GM12878 (cell line): ENCODE measurements at regions of chr20 and their contacts with region 1.

Region 1: DNA sequence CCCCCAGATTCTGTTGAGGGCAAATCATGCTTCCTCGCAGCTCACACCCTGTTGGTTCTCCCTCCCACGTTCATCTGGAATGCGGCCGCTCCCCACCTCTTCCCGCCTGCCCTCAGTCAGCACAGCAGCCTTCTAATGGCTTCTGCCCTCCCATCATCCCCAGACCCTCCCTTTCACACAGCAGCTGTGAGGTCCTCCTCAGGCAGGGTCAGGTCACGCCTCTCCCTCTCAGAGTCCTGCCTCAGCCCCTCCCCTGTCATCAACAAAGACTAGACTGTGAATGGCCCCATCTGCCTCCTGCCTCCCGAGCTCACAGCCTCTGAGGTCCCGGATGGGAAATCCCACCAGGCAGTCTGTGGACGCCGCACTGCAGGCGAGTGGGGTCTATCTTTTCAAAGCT is 7.9 kb upstream of the BHLHE23 start:
- DNase-seq: no peak
- ATAC-seq: peak; percentile 34
- H3K4me3 ChIP-seq: peak overlapping the region; percentile 52; the same call in 1 of the 2 replicates
- H3K27ac ChIP-seq: peak overlapping the region; percentile 24; the same call in 1 of the 2 replicates
- H3K4me1 ChIP-seq: peaks cover 30% of the 10 kb centered on the region
- H3K27me3 ChIP-seq: no peaks in the 10 kb centered on the region
- CTCF ChIP-seq: no peak
- EP300 ChIP-seq: no peak
- POLR2A ChIP-seq: peak; percentile 37
- RAD21 ChIP-seq: no peak

Region 2: DNA sequence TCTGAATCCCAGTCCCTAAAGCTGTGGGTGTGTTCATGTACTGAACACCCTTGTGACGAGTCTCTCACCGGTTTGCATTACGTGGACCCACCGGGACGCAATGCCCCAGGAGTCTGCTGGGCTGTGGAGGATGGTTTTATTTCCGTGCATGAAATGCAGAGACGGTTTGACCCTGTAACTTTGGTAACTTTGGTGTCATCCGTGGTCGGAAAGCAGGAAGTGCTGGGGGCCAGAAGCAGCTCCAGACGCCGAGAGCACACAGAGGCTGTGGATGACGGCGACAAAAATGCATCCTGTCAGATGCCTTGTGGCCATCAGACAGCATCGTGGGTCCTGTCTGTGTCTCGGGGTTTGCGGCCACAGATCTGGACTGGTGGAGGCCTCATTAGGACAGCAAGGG is 15.1 kb before region 1 on chr20:
- CTCF ChIA-PET with region 1: no interaction called
- POLR2A ChIA-PET with region 1: no interaction called
- RAD21 ChIA-PET with region 1: no interaction called
- SMC1A ChIA-PET with region 1: no interaction called
- in situ Hi-C with region 1: no loop called
- intact Hi-C with region 1: no loop called
- DNase-seq: no peak
- ATAC-seq: no peak; the same call in 2 of the 3 replicates
- H3K4me3 ChIP-seq: no peak overlapping the region
- H3K27ac ChIP-seq: no peak overlapping the region
- H3K4me1 ChIP-seq: no peaks in the 10 kb centered on the region
- H3K27me3 ChIP-seq: peaks cover 4 to 10% of the 10 kb centered on the region in 2 experiments
- CTCF ChIP-seq: no peak
- EP300 ChIP-seq: no peak
- POLR2A ChIP-seq: no peak
- RAD21 ChIP-seq: no peak

Region 3: DNA sequence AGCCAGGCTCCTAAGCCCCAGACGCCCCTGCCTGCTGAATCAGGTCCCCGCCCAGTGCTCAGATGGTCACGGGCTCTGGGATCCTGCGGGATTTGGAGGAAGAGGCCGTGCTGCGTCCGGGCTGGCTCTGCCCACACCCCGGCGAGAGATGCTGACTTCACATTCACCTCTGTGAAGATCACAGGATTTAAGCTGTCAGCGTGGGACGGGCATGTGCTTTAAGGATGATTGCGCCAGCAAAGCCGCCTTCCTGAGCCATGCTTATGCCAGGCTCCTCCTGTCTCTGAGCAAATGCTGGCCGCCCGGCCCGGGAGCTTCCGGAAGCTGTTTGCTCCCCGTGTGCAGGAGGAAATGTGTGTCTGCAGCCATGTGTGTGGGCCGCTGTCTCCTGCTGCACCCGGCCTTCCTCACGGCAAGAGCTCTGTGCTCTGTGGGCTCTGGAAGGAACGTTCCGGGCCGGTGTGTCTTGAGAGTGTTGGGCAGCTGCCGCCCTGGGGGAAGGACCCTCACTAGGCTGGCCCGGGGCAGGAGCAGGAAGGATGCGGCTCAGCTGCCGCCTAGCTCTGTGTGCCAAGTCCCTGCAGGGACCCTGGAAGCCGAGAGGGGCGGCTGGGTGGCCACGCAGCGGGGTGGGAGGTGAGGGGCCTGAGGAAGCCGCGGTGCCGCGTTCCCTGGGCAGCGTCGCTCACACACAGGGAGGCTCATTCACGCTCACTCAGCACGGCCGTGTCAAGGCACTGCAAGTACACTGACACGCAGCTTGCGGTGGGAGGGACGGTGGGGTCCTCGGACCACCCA is 11.0 kb after region 1 on chr20:
- CTCF ChIA-PET with region 1: interaction called, 12 read pairs
- POLR2A ChIA-PET with region 1: interaction called, 10 read pairs
- RAD21 ChIA-PET with region 1: interaction called, 20 read pairs
- SMC1A ChIA-PET with region 1: interaction called, 11 read pairs
- in situ Hi-C with region 1: no loop called
- intact Hi-C with region 1: no loop called
- DNase-seq: no peak
- ATAC-seq: peak; percentile 23
- H3K4me3 ChIP-seq: no peak overlapping the region
- H3K27ac ChIP-seq: no peak overlapping the region
- H3K4me1 ChIP-seq: peaks cover 5% of the 10 kb centered on the region; the same call in 1 of the 2 replicates
- H3K27me3 ChIP-seq: no peaks in the 10 kb centered on the region
- CTCF ChIP-seq: no peak
- EP300 ChIP-seq: no peak
- POLR2A ChIP-seq: peak; percentile 7; the same call in 1 of the 2 replicates
- RAD21 ChIP-seq: no peak

Region 4: DNA sequence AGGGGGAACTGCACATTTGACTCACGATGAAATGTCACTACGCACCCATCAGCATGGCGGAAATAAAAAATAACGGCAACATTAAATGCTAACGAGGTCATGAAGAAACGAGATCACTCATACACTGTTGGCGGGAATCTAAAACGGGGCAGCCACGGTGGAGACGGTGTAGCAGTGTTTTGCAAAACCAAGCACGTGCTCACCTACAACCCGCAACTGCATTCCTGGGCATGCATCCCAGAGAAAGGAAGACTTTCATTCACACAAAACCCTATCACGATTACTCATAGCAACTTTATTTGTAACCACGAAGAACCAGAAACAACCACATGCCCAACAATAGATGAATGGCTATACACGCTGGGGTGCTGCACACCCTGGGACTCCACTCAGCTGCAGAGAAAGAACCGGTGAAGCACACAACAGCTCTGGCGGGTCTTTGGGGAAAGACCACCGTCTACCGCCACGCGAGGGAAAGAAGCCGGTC is 124.2 kb after region 1 on chr20:
- CTCF ChIA-PET with region 1: no interaction called
- POLR2A ChIA-PET with region 1: no interaction called
- RAD21 ChIA-PET with region 1: no interaction called
- SMC1A ChIA-PET with region 1: no interaction called
- in situ Hi-C with region 1: no loop called
- intact Hi-C with region 1: no loop called
- DNase-seq: no peak
- ATAC-seq: no peak
- H3K4me3 ChIP-seq: no peak overlapping the region
- H3K27ac ChIP-seq: no peak overlapping the region
- H3K4me1 ChIP-seq: no peaks in the 10 kb centered on the region
- H3K27me3 ChIP-seq: no peaks in the 10 kb centered on the region; a peak in 2 of 4 replicates
- CTCF ChIP-seq: no peak
- EP300 ChIP-seq: no peak
- POLR2A ChIP-seq: no peak
- RAD21 ChIP-seq: no peak